ENCODE measurements at regions of chr9 and their contacts with region 1.

Region 1: DNA sequence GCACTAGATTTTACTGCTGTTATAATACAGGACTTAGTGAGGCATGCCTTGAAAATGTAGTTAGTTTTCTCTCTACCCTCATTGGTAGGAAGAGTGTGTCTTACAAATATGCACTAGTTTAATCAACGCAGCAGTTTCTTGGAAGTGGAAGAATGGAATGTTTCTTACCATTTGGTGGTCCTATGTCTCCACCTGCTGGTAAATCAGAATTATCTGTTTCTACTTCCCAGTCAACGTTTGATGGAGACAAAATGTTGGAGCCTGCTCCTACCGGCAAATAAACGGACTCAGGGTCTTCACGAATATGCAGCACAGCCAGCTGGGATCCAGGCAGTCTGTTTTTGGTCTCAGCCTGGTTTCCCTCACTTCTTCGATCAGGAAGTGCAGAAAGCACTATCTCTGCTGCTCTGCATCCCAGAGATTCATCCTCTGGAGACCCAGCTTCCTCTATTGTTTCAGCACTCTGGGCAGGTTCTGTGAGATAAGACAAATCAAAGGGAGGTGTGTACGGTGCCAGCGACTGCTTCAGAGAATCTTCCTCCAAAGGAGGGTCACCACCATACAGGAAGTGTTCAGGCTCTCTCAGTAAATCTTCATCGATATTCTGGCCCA is 59.5 kb upstream of the PCA3 start:
- DNase-seq: no peak
- ATAC-seq: peak; percentile 40
- H3K4me3 Mint-ChIP-seq: no peak overlapping the region
- H3K27ac Mint-ChIP-seq: no peak overlapping the region
- H3K4me1 Mint-ChIP-seq: peaks cover 6% of the 10 kb centered on the region
- H3K27me3 Mint-ChIP-seq: peaks cover 27% of the 10 kb centered on the region
- CTCF ChIP-seq: peak; percentile 29

Region 2: GRCh38 chr9:75185585-75186170 is 1519.0 kb before region 1 on chr9:
- CTCF ChIA-PET with region 1: no interaction called
- POLR2A ChIA-PET with region 1: no interaction called
- intact Hi-C with region 1: loop called (anchors 5 kb)
- DNase-seq: no peak
- ATAC-seq: no peak
- H3K4me3 Mint-ChIP-seq: no peak overlapping the region
- H3K27ac Mint-ChIP-seq: no peak overlapping the region
- H3K4me1 Mint-ChIP-seq: peaks cover 1% of the 10 kb centered on the region
- H3K27me3 Mint-ChIP-seq: no peaks in the 10 kb centered on the region
- CTCF ChIP-seq: no peak

Region 3: DNA sequence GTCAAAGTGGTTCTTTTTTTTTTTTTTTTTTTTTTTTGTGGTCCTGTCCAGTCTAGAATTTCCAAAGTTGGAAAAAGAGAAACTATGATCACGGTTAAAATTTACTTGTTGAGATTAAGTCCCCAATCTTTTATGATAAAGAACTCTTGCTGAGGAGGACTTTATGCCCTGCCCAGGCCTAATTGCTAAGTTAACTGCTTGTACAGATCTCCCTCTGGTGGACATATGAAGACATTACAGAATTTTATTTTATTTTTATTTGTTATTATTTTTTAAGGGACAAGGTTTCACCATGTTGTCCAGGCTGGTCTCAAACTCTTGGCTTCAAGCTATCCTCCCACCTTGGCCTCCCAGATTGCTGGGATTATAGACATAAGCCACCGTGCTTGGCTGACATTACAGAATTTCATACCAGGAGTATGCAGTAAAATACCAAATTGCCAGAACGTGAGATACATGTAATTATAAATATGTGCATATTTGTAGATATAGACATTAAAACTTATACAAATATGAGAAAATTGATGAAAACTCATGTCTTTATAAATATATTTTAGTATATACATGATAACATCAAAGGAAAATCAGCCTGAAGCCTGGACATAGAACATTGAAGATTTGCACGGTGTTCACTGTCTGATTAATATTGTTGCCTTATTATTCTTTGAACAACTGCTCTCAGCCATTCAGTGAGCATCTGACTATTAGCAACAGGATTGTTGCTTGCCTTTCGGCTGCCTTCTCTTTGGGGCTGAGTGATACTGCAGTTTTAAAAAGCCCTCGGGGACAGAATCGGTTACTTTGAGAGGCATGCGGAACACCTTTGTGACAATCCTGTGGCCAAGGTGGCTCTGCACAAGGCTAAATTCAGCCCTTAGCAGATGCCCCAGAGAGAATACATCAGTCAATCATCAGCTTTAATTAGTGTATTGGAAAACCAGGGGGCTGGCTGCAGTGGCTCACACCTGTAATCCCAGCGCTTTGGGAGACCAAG is 401.5 kb before region 1 on chr9:
- CTCF ChIA-PET with region 1: interaction called, 3 read pairs
- POLR2A ChIA-PET with region 1: no interaction called
- intact Hi-C with region 1: loop called (anchors 10 kb)
- DNase-seq: no peak
- ATAC-seq: peak; percentile 56
- H3K4me3 Mint-ChIP-seq: no peak overlapping the region
- H3K27ac Mint-ChIP-seq: no peak overlapping the region
- H3K4me1 Mint-ChIP-seq: no peaks in the 10 kb centered on the region
- H3K27me3 Mint-ChIP-seq: peaks cover 11% of the 10 kb centered on the region
- CTCF ChIP-seq: peak; percentile 31

Region 4: DNA sequence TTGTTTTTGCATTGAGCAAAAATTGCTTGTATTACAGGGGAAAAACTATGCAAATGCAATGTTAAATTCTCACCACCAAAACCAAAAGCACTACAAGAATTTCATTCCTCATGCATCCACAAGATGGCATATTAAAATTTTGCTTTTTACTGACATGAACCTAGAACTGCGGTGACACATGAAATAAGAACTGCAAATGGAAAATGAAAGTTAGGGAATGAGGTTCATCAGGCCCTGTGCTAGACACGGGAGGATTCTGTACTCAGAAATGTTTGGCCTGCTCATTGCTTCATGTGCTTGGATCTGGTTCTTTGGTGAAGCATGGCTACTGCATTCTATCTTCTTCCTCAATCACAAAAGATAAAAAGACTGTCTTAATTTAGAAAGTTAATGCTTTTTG is 301.3 kb before region 1 on chr9:
- CTCF ChIA-PET with region 1: interaction called, 6 read pairs
- POLR2A ChIA-PET with region 1: no interaction called
- intact Hi-C with region 1: loop called (anchors 1 kb)
- DNase-seq: no peak
- ATAC-seq: peak; percentile 70
- H3K4me3 Mint-ChIP-seq: peak overlapping the region; percentile 8
- H3K27ac Mint-ChIP-seq: peak overlapping the region; percentile 19
- H3K4me1 Mint-ChIP-seq: peaks cover 13% of the 10 kb centered on the region
- H3K27me3 Mint-ChIP-seq: no peaks in the 10 kb centered on the region
- CTCF ChIP-seq: peak; percentile 20

Region 5: GRCh38 chr9:76443892-76444581 is 260.7 kb before region 1 on chr9:
- CTCF ChIA-PET with region 1: interaction called, 54 read pairs
- POLR2A ChIA-PET with region 1: no interaction called
- intact Hi-C with region 1: loop called (anchors 1 kb)
- DNase-seq: no peak
- ATAC-seq: no peak
- H3K4me3 Mint-ChIP-seq: no peak overlapping the region
- H3K27ac Mint-ChIP-seq: no peak overlapping the region
- H3K4me1 Mint-ChIP-seq: peaks cover 3% of the 10 kb centered on the region
- H3K27me3 Mint-ChIP-seq: no peaks in the 10 kb centered on the region
- CTCF ChIP-seq: no peak

Region 6: GRCh38 chr9:76451234-76451633 is 253.5 kb before region 1 on chr9:
- CTCF ChIA-PET with region 1: interaction called, 54 read pairs
- POLR2A ChIA-PET with region 1: no interaction called
- intact Hi-C with region 1: loop called (anchors 1 kb)
- DNase-seq: no peak
- ATAC-seq: no peak
- H3K4me3 Mint-ChIP-seq: no peak overlapping the region
- H3K27ac Mint-ChIP-seq: no peak overlapping the region
- H3K4me1 Mint-ChIP-seq: peaks cover 4% of the 10 kb centered on the region
- H3K27me3 Mint-ChIP-seq: no peaks in the 10 kb centered on the region
- CTCF ChIP-seq: no peak

Region 7: GRCh38 chr9:76761448-76761847 is 56.7 kb after region 1 on chr9:
- CTCF ChIA-PET with region 1: no interaction called
- POLR2A ChIA-PET with region 1: no interaction called
- intact Hi-C with region 1: no loop called
- DNase-seq: no peak
- ATAC-seq: no peak
- H3K4me3 Mint-ChIP-seq: no peak overlapping the region
- H3K27ac Mint-ChIP-seq: no peak overlapping the region
- H3K4me1 Mint-ChIP-seq: peaks cover 39% of the 10 kb centered on the region
- H3K27me3 Mint-ChIP-seq: no peaks in the 10 kb centered on the region
- CTCF ChIP-seq: no peak

Measured in activated B cell treated with CpG ODN at 0.5 μM for 24 hours (primary cell).